Naive thymus-derived CD4-positive, alpha-beta T cell (primary cell): ENCODE measurements at regions of chr12 and their contacts with region 1.

Region 1: GRCh38 chr12:91326058-91327027 is 143.7 kb upstream of the DCN start:
- DNase-seq: peak in 7 of 9 donors; percentile 1 to 50 (median 27)
- ATAC-seq: peak; percentile 40
- H3K4me3 ChIP-seq: no peak overlapping the region
- H3K4me3 Mint-ChIP-seq: no peak overlapping the region
- H3K27ac ChIP-seq: no peak overlapping the region
- H3K27ac Mint-ChIP-seq: no peak overlapping the region
- H3K4me1 ChIP-seq: no peaks in the 10 kb centered on the region
- H3K4me1 Mint-ChIP-seq: no peaks in the 10 kb centered on the region
- H3K27me3 ChIP-seq: no peaks in the 10 kb centered on the region
- H3K27me3 Mint-ChIP-seq: peaks cover 0 to 8% (median 5%) of the 10 kb centered on the region in 5 donors

Region 2: DNA sequence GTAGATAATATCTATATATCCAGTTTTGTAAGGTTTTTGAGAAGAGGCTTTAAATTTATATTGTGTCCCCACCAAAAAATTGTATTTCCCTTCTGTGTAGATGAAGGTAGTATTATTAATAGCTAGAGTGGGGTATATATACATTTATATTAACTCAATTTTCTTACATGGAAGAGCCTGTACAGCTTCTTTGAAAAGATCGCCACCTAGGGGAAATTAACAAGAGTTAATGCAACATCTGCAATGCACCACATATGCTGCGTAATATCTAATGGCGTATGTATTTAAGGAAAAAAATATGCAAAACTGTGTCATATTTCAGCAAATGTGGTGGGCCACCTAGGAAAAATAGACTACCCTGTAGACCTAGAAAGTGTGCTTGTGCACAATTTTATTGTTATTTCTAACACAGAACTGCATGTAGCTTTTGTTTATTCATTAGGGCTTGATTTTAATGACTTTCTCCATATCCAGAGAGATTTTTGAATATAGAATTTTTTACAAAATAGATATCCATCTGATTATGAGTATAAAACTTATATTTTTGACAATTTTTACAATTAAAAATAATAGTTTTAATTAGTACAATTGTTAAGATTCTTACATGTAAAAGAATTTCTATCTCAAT is 385.4 kb before region 1 on chr12:
- CTCF ChIA-PET with region 1: no interaction called
- POLR2A ChIA-PET with region 1: no interaction called
- intact Hi-C with region 1: loop called in 1 of 2 experiments (anchors 10 kb)
- DNase-seq: peak in 1 of 9 donors; percentile 14
- ATAC-seq: no peak
- H3K4me3 ChIP-seq: no peak overlapping the region
- H3K4me3 Mint-ChIP-seq: no peak overlapping the region
- H3K27ac ChIP-seq: no peak overlapping the region
- H3K27ac Mint-ChIP-seq: no peak overlapping the region
- H3K4me1 ChIP-seq: no peaks in the 10 kb centered on the region
- H3K4me1 Mint-ChIP-seq: peaks cover 0 to 2% (median 0%) of the 10 kb centered on the region in 7 donors
- H3K27me3 ChIP-seq: no peaks in the 10 kb centered on the region
- H3K27me3 Mint-ChIP-seq: peaks cover 5 to 13% (median 5%) of the 10 kb centered on the region in 5 donors

Region 3: DNA sequence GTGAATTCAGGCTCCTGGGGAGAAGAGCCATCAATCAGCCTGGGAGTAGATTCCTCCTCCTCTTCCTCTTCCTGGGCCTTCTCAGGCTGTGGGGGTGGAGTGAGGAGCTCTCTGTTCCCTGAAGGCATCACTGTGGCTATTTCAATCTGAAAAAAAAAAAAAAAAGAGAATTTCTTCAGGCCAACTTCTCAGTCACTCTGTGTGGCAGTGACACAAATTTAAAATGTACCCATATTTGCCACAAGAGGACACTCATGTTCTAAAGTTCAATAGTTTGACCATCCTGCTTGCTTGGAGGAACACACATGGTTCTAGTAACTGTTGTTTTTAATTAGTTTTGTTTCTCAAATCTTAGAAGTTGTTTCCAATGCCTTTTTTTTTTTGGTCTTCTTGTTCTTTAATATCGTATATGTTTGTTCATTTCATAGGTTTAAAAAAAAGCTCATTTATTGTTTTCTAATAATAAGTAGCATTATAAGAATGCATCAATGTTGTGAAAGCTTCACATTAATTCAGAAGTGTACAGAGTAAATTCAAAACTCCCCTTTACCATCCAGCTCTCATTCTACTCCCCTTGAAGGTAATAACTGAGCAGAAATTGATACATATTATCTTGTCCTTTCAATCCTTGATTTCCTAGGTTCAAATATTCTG is 348.1 kb before region 1 on chr12:
- CTCF ChIA-PET with region 1: no interaction called
- POLR2A ChIA-PET with region 1: no interaction called
- intact Hi-C with region 1: loop called in 1 of 2 experiments (anchors 1 kb)
- DNase-seq: peak in 1 of 9 donors; percentile 7
- ATAC-seq: peak; percentile 59
- H3K4me3 ChIP-seq: no peak overlapping the region
- H3K4me3 Mint-ChIP-seq: no peak overlapping the region
- H3K27ac ChIP-seq: no peak overlapping the region
- H3K27ac Mint-ChIP-seq: no peak overlapping the region
- H3K4me1 ChIP-seq: no peaks in the 10 kb centered on the region
- H3K4me1 Mint-ChIP-seq: no peaks in the 10 kb centered on the region
- H3K27me3 ChIP-seq: no peaks in the 10 kb centered on the region
- H3K27me3 Mint-ChIP-seq: peaks cover 0 to 19% (median 0%) of the 10 kb centered on the region in 5 donors

Region 4: DNA sequence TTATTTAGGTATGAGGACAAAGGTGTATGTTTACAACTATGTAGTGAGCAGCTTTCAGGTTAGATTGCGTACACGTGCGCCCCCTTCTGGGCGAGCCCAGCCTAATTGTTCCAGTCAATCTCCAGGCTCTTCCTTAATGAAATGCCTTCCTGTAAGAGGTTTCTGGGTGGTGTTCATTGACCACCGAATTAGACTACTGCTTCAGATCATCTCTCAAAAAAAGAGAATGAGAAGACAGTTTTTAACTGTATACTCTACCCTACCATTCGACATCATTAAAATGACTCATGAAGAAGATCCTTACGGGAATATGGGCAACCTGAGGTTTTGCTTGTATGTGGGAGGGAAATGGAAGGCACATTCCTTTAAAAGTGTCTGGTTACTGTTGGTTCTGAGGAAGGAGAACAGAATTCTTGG is 217.2 kb before region 1 on chr12:
- CTCF ChIA-PET with region 1: no interaction called
- POLR2A ChIA-PET with region 1: no interaction called
- intact Hi-C with region 1: no loop called
- DNase-seq: peak in 3 of 9 donors; percentile 4 to 53 (median 7)
- ATAC-seq: peak; percentile 46
- H3K4me3 ChIP-seq: no peak overlapping the region
- H3K4me3 Mint-ChIP-seq: no peak overlapping the region
- H3K27ac ChIP-seq: no peak overlapping the region
- H3K27ac Mint-ChIP-seq: no peak overlapping the region
- H3K4me1 ChIP-seq: no peaks in the 10 kb centered on the region
- H3K4me1 Mint-ChIP-seq: peaks cover 0 to 2% (median 0%) of the 10 kb centered on the region in 7 donors
- H3K27me3 ChIP-seq: no peaks in the 10 kb centered on the region
- H3K27me3 Mint-ChIP-seq: peaks cover 0 to 15% (median 9%) of the 10 kb centered on the region in 5 donors

Region 5: GRCh38 chr12:91178139-91178561 is 148.2 kb before region 1 on chr12:
- CTCF ChIA-PET with region 1: no interaction called
- POLR2A ChIA-PET with region 1: no interaction called
- intact Hi-C with region 1: loop called (anchors 1 to 5 kb)
- DNase-seq: no peak
- ATAC-seq: no peak
- H3K4me3 ChIP-seq: no peak overlapping the region
- H3K4me3 Mint-ChIP-seq: peak overlapping the region in 2 of 10 donors; percentile 24 to 58
- H3K27ac ChIP-seq: no peak overlapping the region
- H3K27ac Mint-ChIP-seq: no peak overlapping the region
- H3K4me1 ChIP-seq: no peaks in the 10 kb centered on the region
- H3K4me1 Mint-ChIP-seq: no peaks in the 10 kb centered on the region
- H3K27me3 ChIP-seq: no peaks in the 10 kb centered on the region
- H3K27me3 Mint-ChIP-seq: peaks cover 0 to 4% (median 0%) of the 10 kb centered on the region in 5 donors